ENCODE measurements at regions of chr17 and their contacts with region 1.

Region 1: GRCh38 chr17:9924735-9925191 is 19.7 kb upstream of the RCVRN start:
- DNase-seq: peak; percentile 1
- H3K4me3 Mint-ChIP-seq: no peak overlapping the region
- H3K27ac Mint-ChIP-seq: no peak overlapping the region
- H3K4me1 Mint-ChIP-seq: no peaks in the 10 kb centered on the region
- H3K27me3 Mint-ChIP-seq: peaks cover 3% of the 10 kb centered on the region

Region 2: DNA sequence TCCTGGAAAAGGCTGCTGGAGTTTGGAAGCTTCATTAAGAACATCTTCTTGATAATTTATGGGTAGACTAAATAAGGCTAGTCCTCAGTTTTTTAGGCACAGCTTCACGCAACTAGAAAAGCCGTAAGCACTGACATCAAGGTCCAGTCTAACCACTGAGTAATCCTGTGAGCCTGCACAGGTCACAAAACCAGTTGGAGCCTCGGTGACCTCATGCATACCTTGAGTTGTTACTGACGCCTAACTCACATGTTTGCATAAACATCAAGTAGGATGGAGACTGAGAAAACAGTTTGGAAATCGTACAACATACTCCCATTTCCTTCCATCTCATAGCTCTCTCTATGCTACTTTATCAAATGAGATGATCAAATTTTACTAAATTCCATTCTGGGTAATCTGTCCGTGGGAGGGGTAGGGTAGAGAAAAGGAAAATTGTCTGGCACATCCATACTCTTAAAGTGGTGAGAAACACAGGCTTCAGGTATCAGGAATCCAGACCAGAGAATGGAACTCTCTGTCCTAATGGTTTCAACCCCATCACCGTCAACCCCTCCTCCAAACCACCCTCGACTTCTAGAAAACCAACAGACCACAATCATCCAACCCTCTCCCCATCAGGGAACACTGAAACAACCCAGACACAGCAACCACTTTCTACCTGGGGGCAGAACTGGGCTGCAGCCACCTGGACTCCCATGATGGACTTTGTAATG is 44.3 kb after region 1 on chr17:
- intact Hi-C with region 1: no loop called
- DNase-seq: no peak
- H3K4me3 Mint-ChIP-seq: no peak overlapping the region
- H3K27ac Mint-ChIP-seq: no peak overlapping the region
- H3K4me1 Mint-ChIP-seq: no peaks in the 10 kb centered on the region
- H3K27me3 Mint-ChIP-seq: no peaks in the 10 kb centered on the region

Region 3: DNA sequence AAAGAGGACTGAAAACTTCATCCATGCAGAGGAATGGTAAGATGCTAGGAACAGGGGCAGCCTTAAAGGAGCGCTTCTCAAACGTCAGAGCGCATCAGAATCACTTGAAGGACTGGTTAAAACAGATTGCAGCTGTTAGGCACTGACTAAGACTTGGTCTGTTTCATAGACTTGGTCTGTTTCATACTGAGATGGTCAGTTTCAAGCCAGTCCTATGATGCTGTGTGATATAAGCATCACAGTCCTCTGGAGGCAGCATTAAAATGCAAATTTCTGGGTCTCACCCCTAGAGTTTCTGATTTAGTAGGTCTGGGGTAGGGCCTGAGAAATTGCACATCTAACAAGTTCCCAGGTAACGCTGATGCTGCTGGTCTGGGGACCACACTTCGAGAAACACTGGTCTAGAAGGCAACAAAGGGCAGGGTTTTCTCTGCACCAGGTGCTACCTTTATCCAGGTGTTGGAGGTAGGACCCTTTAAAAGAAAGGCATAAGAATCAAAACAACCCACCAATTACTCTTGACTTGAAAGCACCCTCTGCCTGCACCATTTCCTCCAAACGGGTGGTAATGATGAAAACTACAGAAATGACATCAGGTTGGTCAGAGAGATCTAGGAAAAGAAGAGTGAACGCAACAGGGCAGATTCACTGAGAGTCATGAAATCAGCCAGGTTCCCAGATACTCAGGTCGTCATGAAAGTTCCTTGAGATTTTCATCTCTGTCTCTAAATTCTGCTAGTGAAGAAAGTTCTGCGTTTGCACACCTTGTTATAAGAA is 75.3 kb after region 1 on chr17:
- intact Hi-C with region 1: no loop called
- DNase-seq: no peak
- H3K4me3 Mint-ChIP-seq: no peak overlapping the region
- H3K27ac Mint-ChIP-seq: no peak overlapping the region
- H3K4me1 Mint-ChIP-seq: no peaks in the 10 kb centered on the region
- H3K27me3 Mint-ChIP-seq: no peaks in the 10 kb centered on the region

Region 4: GRCh38 chr17:10072561-10073385 is 148.0 kb after region 1 on chr17:
- intact Hi-C with region 1: no loop called
- DNase-seq: no peak
- H3K4me3 Mint-ChIP-seq: no peak overlapping the region
- H3K27ac Mint-ChIP-seq: no peak overlapping the region
- H3K4me1 Mint-ChIP-seq: no peaks in the 10 kb centered on the region
- H3K27me3 Mint-ChIP-seq: no peaks in the 10 kb centered on the region

Region 5: GRCh38 chr17:10295728-10296343 is 371.1 kb after region 1 on chr17:
- intact Hi-C with region 1: loop called (anchors 10 kb)
- DNase-seq: no peak
- H3K4me3 Mint-ChIP-seq: no peak overlapping the region
- H3K27ac Mint-ChIP-seq: no peak overlapping the region
- H3K4me1 Mint-ChIP-seq: no peaks in the 10 kb centered on the region
- H3K27me3 Mint-ChIP-seq: no peaks in the 10 kb centered on the region

Region 6: GRCh38 chr17:10357768-10358167 is 433.0 kb after region 1 on chr17:
- intact Hi-C with region 1: loop called (anchors 2 kb)
- DNase-seq: no peak
- H3K4me3 Mint-ChIP-seq: no peak overlapping the region
- H3K27ac Mint-ChIP-seq: no peak overlapping the region
- H3K4me1 Mint-ChIP-seq: no peaks in the 10 kb centered on the region
- H3K27me3 Mint-ChIP-seq: no peaks in the 10 kb centered on the region

Measured in activated T-helper 1 cell treated with anti-CD3 and anti-CD28 coated beads, Interleukin-12 subunit alpha, Interleukin-12 subunit beta, Interleukin-2, Interleukin-4 antibody, amounts not matched to agents 30 ng/mL and 10 ng/mL and 1 ng/mL, durations not matched to agents 14 hours and 24 hours and 36 hours (primary cell).